ENCODE measurements at regions of chr21 and their contacts with region 1.

Region 1: GRCh38 chr21:44949779-44950198 is 10.0 kb downstream of the SLX9 start:
- DNase-seq: peak; percentile 79
- H3K27ac ChIP-seq: peak overlapping the region; percentile 52
- CTCF ChIP-seq: peak; percentile 92

Region 2: DNA sequence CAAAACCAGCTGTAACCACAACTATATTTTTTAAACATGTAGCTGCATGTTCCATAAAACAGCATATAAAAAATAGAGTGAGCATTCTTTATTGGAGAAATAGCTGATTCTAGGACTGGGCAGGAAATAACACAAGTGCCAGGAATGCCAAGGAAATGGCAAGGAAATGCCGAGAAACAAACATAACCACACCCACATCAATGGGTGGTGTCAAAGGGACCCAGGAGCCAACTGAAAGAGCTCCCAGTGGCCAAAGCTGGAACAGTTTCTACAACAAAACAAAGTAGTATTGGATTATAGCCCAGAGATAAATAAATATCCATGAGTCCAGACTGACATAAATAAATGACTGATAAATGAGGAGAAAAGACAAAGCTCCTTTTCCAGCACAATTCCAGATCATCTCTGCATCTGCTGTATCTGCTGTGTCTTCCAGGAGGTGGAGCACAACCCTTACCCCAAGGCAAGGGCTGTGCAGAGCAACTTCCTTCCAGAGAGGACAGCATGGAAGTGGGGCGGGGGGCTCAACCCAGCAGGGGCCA is 152.7 kb after region 1 on chr21:
- CTCF ChIA-PET with region 1: interaction called, 12 read pairs
- POLR2A ChIA-PET with region 1: no interaction called
- DNase-seq: peak; percentile 76
- H3K27ac ChIP-seq: peak overlapping the region; percentile 92
- CTCF ChIP-seq: peak; percentile 67

Region 3: DNA sequence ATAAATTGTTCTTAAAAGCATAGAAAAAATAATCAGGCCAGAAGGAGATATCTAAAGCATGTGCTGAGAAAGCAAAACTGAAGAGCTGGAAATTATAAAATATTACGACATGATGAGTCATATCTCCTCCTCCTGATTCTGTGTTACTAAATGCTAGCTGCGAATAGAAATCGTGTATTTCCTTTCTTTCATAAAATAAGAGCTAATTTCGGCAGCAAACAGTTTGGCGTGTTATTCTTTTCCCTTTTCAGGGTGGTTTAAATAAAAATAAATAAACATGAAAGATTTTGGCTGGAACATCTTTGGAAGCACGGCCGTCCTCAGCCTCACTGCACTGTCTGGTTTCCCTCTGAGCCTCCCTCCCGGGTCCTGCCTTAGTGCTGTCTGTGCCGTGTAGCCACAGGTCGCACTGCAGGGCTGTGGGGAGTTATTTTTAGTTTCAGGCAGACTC is 180.6 kb after region 1 on chr21:
- CTCF ChIA-PET with region 1: interaction called, 57 read pairs
- POLR2A ChIA-PET with region 1: interaction called, 3 read pairs
- DNase-seq: peak; percentile 72
- H3K27ac ChIP-seq: peak overlapping the region; percentile 85
- CTCF ChIP-seq: no peak

Measured in RWPE1 (cell line).